T-cell (primary cell): ENCODE measurements at regions of chr1 and their contacts with region 1.

Region 1: GRCh38 chr1:155591770-155592169 is 18.2 kb upstream of the MSTO1 start:
- DNase-seq: peak in 13 of 35 experiments; percentile 10 to 78 (median 26)
- ATAC-seq: peak in 3 of 4 experiments; percentile 58 to 74 (median 72)
- H3K4me3 ChIP-seq: no peak overlapping the region
- H3K4me3 Mint-ChIP-seq: no peak overlapping the region
- H3K27ac ChIP-seq: no peak overlapping the region
- H3K27ac Mint-ChIP-seq: no peak overlapping the region
- H3K4me1 ChIP-seq: no peaks in the 10 kb centered on the region
- H3K4me1 Mint-ChIP-seq: peaks cover 0 to 3% (median 2%) of the 10 kb centered on the region in 3 donors
- H3K27me3 ChIP-seq: no peaks in the 10 kb centered on the region
- H3K27me3 Mint-ChIP-seq: no peaks in the 10 kb centered on the region

Region 2: GRCh38 chr1:156033011-156033410 is 441.2 kb after region 1 on chr1:
- CTCF ChIA-PET with region 1: no interaction called
- POLR2A ChIA-PET with region 1: interaction called in 1 of 2 experiments, 12 read pairs
- DNase-seq: no peak
- ATAC-seq: no peak
- H3K4me3 ChIP-seq: no peak overlapping the region
- H3K4me3 Mint-ChIP-seq: no peak overlapping the region
- H3K27ac ChIP-seq: no peak overlapping the region
- H3K27ac Mint-ChIP-seq: no peak overlapping the region
- H3K4me1 ChIP-seq: no peaks in the 10 kb centered on the region
- H3K4me1 Mint-ChIP-seq: no peaks in the 10 kb centered on the region
- H3K27me3 ChIP-seq: no peaks in the 10 kb centered on the region
- H3K27me3 Mint-ChIP-seq: no peaks in the 10 kb centered on the region